ENCODE measurements at regions of chr3 and their contacts with region 1.

Region 1: DNA sequence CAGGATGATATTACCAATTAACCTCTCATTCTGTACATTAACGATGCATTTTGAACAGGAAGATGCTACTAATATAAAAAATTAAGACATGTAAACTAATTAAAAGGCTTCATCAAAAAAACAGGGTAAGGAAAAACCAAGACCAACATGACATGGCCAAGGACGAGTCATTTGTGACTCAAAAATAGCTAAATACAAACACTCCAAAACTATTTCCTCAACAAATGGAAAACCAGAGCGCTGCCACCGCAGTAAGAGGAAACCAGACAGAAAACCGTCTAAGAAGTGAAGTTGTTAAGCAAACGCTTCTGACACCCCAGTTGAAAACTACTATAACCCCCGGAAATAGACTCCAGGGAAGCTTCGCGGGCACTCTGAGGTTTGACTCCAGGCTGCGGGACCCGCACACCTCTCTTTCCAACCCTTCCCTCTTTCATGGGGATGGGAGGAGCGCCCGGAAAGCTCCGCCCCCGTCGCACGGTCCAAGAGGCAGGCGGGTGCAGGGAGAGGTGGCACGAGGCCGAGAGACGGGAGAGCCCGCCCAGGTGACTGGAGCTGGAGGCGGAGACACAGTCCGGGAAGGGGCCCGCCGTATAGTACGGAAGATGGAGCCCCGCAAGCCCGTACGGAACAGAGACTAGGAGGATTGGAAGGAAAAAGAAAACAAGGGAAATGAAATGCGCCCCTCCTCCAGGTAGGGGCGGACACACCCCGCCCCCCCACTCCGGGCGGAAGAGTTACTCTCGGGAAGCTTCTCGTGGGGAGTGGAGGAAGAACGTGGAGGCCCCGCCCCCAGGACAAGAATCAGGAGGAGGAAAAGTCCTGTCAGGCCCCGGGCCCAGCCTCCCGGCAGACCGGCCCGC is 708 bp downstream of the DCAF1 start:
- DNase-seq: peak; percentile 97
- H3K4me3 Mint-ChIP-seq: peak overlapping the region; percentile 93
- H3K27ac Mint-ChIP-seq: peak overlapping the region; percentile 97
- H3K4me1 Mint-ChIP-seq: peaks cover 17% of the 10 kb centered on the region
- H3K27me3 Mint-ChIP-seq: peaks cover 2% of the 10 kb centered on the region

Region 2: DNA sequence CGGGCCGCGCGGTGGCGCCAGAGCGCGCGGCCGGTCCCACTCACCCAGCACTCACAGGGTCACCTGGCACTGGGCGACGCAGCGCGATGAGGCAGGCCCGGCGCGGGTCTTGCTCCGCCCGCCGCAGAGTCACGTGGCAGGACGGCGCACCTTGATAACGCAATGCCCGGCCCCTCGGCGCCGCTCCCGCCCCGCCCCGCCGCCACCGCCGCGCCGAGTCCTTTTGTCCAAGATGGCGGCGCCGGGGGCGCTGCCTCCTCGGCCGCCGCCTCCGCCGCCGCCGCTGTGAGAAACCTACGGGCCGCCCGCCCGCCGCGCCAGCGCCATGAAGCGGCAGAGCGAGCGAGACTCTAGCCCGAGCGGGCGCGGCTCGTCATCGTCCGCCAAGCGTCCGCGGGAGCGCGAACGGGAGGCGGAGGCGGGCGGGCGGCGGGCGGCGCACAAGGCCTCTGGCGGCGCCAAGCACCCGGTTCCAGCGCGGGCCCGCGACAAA is 108.0 kb before region 1 on chr3 and contains the start of gene RBM15B:
- intact Hi-C with region 1: loop called (anchors 1 kb)
- DNase-seq: peak; percentile 99
- H3K4me3 Mint-ChIP-seq: peak within 1 kb of the TSS; percentile 88
- H3K27ac Mint-ChIP-seq: peak within 1 kb of the TSS; percentile 88
- H3K4me1 Mint-ChIP-seq: peaks cover 55% of the 10 kb centered on the region
- H3K27me3 Mint-ChIP-seq: no peaks in the 10 kb centered on the region
- total RNA-seq, gene RBM15B: 37.7 and 38.3 TPM in 2 replicates

Region 3: GRCh38 chr3:51637941-51638471 is 138.9 kb after region 1 on chr3:
- intact Hi-C with region 1: loop called (anchors 1 kb)
- DNase-seq: peak; percentile 79
- H3K4me3 Mint-ChIP-seq: no peak overlapping the region
- H3K27ac Mint-ChIP-seq: no peak overlapping the region
- H3K4me1 Mint-ChIP-seq: peaks cover 4% of the 10 kb centered on the region
- H3K27me3 Mint-ChIP-seq: no peaks in the 10 kb centered on the region

Region 4: GRCh38 chr3:51682079-51682478 is 183.0 kb after region 1 on chr3:
- intact Hi-C with region 1: loop called (anchors 1 kb)
- DNase-seq: peak; percentile 95
- H3K4me3 Mint-ChIP-seq: peak overlapping the region; percentile 80
- H3K27ac Mint-ChIP-seq: peak overlapping the region; percentile 72
- H3K4me1 Mint-ChIP-seq: peaks cover 81% of the 10 kb centered on the region
- H3K27me3 Mint-ChIP-seq: no peaks in the 10 kb centered on the region